Naive thymus-derived CD4-positive, alpha-beta T cell (primary cell): ENCODE measurements at regions of chr19 and their contacts with region 1.

Region 1: DNA sequence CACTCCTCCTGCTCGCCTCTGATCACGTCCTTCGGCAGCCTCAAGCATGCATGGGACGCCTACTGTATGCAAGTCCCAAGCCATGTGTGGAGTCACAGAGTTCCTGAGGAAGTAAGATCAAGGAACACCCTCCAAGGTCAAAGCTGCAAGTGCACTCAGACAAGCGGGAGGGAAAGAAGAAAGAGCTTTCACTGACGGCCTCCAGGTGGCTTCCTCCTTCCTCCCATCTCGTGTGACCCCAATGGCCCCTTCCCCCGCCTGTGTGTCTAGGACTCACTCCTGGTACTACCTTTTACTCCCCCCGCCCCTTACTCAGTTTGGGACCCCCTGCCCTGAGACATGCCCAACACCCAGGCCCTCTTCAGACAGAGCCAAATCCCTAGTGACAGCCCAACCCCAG is 6.0 kb downstream of the HAUS8 start:
- DNase-seq: no peak
- ATAC-seq: no peak
- H3K4me3 ChIP-seq: no peak overlapping the region
- H3K4me3 Mint-ChIP-seq: no peak overlapping the region
- H3K27ac ChIP-seq: no peak overlapping the region
- H3K27ac Mint-ChIP-seq: peak overlapping the region in 2 of 9 donors; percentile 46 to 62
- H3K4me1 ChIP-seq: peaks cover 15 to 19% of the 10 kb centered on the region in 2 donors
- H3K4me1 Mint-ChIP-seq: peaks cover 32 to 52% (median 43%) of the 10 kb centered on the region in 7 donors
- H3K27me3 ChIP-seq: no peaks in the 10 kb centered on the region
- H3K27me3 Mint-ChIP-seq: no peaks in the 10 kb centered on the region

Region 2: DNA sequence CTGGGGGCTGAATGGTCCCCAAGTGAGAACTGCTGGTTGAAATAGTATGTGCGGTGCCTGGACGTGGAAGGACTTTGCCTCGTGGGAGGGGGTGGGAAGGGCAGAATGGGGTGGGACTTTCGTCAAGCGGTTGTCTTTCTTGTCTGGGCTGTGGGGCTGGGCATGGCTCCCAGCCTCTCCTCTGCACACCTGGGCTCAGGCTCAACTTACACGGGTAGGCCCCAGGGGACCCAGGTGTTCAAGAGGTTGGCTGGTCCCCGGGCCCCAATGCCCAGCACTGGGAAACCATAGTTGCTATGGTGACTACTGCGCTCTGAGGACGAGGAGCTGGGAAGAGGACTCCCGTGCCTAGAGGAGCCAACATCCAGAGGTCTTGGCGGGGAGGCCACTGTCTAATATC is 342.3 kb before region 1 on chr19:
- CTCF ChIA-PET with region 1: no interaction called
- POLR2A ChIA-PET with region 1: no interaction called
- intact Hi-C with region 1: no loop called
- DNase-seq: no peak
- ATAC-seq: no peak
- H3K4me3 ChIP-seq: no peak overlapping the region
- H3K4me3 Mint-ChIP-seq: no peak overlapping the region
- H3K27ac ChIP-seq: no peak overlapping the region
- H3K27ac Mint-ChIP-seq: no peak overlapping the region
- H3K4me1 ChIP-seq: no peaks in the 10 kb centered on the region
- H3K4me1 Mint-ChIP-seq: no peaks in the 10 kb centered on the region
- H3K27me3 ChIP-seq: no peaks in the 10 kb centered on the region
- H3K27me3 Mint-ChIP-seq: peaks cover 0 to 6% (median 0%) of the 10 kb centered on the region in 5 donors

Region 3: GRCh38 chr19:17125715-17126677 is 56.8 kb after region 1 on chr19:
- CTCF ChIA-PET with region 1: no interaction called
- POLR2A ChIA-PET with region 1: interaction called, 56 read pairs
- intact Hi-C with region 1: loop called in 1 of 2 experiments (anchors 2 kb)
- DNase-seq: peak; percentile 58 to 87 (median 83)
- ATAC-seq: peak; percentile 91
- H3K4me3 ChIP-seq: peak overlapping the region; percentile 71
- H3K4me3 Mint-ChIP-seq: peak overlapping the region; percentile 81 to 95 (median 86)
- H3K27ac ChIP-seq: peak overlapping the region; percentile 95
- H3K27ac Mint-ChIP-seq: peak overlapping the region; percentile 90 to 100 (median 99)
- H3K4me1 ChIP-seq: peaks cover 33 to 41% of the 10 kb centered on the region in 2 donors
- H3K4me1 Mint-ChIP-seq: peaks cover 18 to 71% (median 50%) of the 10 kb centered on the region in 7 donors
- H3K27me3 ChIP-seq: no peaks in the 10 kb centered on the region
- H3K27me3 Mint-ChIP-seq: no peaks in the 10 kb centered on the region

Region 4: GRCh38 chr19:17183858-17184321 is 114.7 kb after region 1 on chr19:
- CTCF ChIA-PET with region 1: interaction called, 4 read pairs
- POLR2A ChIA-PET with region 1: interaction called, 33 read pairs
- intact Hi-C with region 1: loop called (anchors 1 kb)
- DNase-seq: peak in 6 of 9 donors; percentile 18 to 41 (median 34)
- ATAC-seq: peak; percentile 64
- H3K4me3 ChIP-seq: peak overlapping the region; percentile 75
- H3K4me3 Mint-ChIP-seq: peak overlapping the region; percentile 82 to 94 (median 89)
- H3K27ac ChIP-seq: peak overlapping the region; percentile 68
- H3K27ac Mint-ChIP-seq: peak overlapping the region; percentile 85 to 99 (median 96)
- H3K4me1 ChIP-seq: peaks cover 13 to 16% of the 10 kb centered on the region in 2 donors
- H3K4me1 Mint-ChIP-seq: peaks cover 16 to 29% (median 20%) of the 10 kb centered on the region in 7 donors
- H3K27me3 ChIP-seq: no peaks in the 10 kb centered on the region
- H3K27me3 Mint-ChIP-seq: no peaks in the 10 kb centered on the region

Region 5: GRCh38 chr19:17215125-17215971 is 146.1 kb after region 1 on chr19 and contains the start of gene USE1:
- CTCF ChIA-PET with region 1: no interaction called
- POLR2A ChIA-PET with region 1: interaction called, 4 read pairs
- intact Hi-C with region 1: loop called in 1 of 2 experiments (anchors 5 kb)
- DNase-seq: peak; percentile 70 to 91 (median 89)
- ATAC-seq: peak; percentile 97
- H3K4me3 ChIP-seq: peak within 1 kb of the TSS; percentile 92
- H3K4me3 Mint-ChIP-seq: peak within 1 kb of the TSS; percentile 83 to 99 (median 90)
- H3K27ac ChIP-seq: peak within 1 kb of the TSS; percentile 89
- H3K27ac Mint-ChIP-seq: peak within 1 kb of the TSS; percentile 97 to 100 (median 99)
- H3K4me1 ChIP-seq: peaks cover 13 to 16% of the 10 kb centered on the region in 2 donors
- H3K4me1 Mint-ChIP-seq: peaks cover 0 to 16% (median 12%) of the 10 kb centered on the region in 7 donors
- H3K27me3 ChIP-seq: no peaks in the 10 kb centered on the region
- H3K27me3 Mint-ChIP-seq: no peaks in the 10 kb centered on the region
- total RNA-seq, gene USE1: 24.7 to 51.1 (median 30.5) TPM

Region 6: GRCh38 chr19:17260842-17261325 is 191.7 kb after region 1 on chr19:
- CTCF ChIA-PET with region 1: interaction called, 4 read pairs
- POLR2A ChIA-PET with region 1: no interaction called
- intact Hi-C with region 1: loop called in 1 of 2 experiments (anchors 1 kb)
- DNase-seq: peak; percentile 76 to 90 (median 86)
- ATAC-seq: peak; percentile 100
- H3K4me3 ChIP-seq: no peak overlapping the region
- H3K4me3 Mint-ChIP-seq: no peak overlapping the region
- H3K27ac ChIP-seq: no peak overlapping the region
- H3K27ac Mint-ChIP-seq: peak overlapping the region in 3 of 9 donors; percentile 2 to 82 (median 24)
- H3K4me1 ChIP-seq: peaks cover 0 to 10% of the 10 kb centered on the region in 2 donors
- H3K4me1 Mint-ChIP-seq: peaks cover 5 to 14% (median 13%) of the 10 kb centered on the region in 7 donors
- H3K27me3 ChIP-seq: no peaks in the 10 kb centered on the region
- H3K27me3 Mint-ChIP-seq: no peaks in the 10 kb centered on the region

Region 7: DNA sequence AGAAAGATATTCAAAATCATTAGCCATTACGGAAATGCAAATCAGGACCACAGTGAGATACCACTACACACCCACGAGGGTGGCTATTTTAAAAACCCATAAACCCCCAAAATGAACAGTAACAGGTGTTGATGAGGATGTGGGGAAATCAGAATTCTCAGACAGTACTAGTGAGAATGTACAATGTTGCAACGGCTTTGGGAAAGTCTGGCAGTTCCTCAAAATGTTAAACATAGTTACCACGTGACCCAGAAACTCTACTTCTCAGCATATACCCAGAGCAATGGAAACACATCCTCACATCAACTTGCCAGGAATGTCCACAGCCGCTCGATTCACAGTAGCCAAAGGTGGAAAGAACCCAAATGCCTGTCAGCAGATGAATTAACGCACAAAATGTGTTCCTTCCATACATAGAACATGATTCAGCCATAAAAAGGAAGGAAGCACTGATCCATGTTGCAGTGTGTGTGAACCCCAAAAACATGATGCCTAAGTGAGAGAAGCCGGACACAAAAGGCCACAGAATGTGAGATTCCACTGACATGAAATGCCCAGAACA is 300.9 kb after region 1 on chr19:
- CTCF ChIA-PET with region 1: no interaction called
- POLR2A ChIA-PET with region 1: no interaction called
- intact Hi-C with region 1: no loop called
- DNase-seq: no peak
- ATAC-seq: peak; percentile 61
- H3K4me3 ChIP-seq: no peak overlapping the region
- H3K4me3 Mint-ChIP-seq: peak overlapping the region in 1 of 10 donors; percentile 1
- H3K27ac ChIP-seq: no peak overlapping the region
- H3K27ac Mint-ChIP-seq: no peak overlapping the region
- H3K4me1 ChIP-seq: no peaks in the 10 kb centered on the region
- H3K4me1 Mint-ChIP-seq: peaks cover 0 to 6% (median 0%) of the 10 kb centered on the region in 7 donors
- H3K27me3 ChIP-seq: no peaks in the 10 kb centered on the region
- H3K27me3 Mint-ChIP-seq: peaks cover 0 to 14% (median 6%) of the 10 kb centered on the region in 5 donors